Left ventricle myocardium inferior (tissue), 1 donor: ENCODE measurements at regions of chr11 and their contacts with region 1.

Region 1: DNA sequence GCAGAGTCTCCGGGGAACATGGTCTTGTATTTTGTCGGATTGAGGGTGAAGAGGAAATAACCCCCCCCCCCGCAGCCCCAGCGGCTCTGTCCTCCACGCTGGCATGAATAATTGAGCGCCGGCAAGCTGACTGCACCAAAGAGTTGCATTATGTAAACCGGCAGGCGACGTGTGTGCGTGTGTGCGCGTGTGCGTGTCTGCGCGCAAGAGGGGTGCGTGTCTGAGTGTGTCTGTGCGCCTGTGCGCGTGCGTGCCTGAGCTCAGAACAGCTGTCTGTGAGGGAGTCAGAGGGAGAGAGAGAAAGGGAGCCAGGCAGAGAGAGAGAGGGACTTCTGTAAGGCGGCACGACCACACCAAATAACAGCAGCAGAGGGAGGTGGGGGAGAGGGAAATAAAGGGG is 94.4 kb downstream of the SCN3B start:
- DNase-seq: peak; percentile 60
- H3K4me3 ChIP-seq: peak overlapping the region; percentile 55
- H3K27ac ChIP-seq: peak overlapping the region; percentile 75
- H3K4me1 ChIP-seq: peaks cover 39% of the 10 kb centered on the region
- H3K27me3 ChIP-seq: peaks cover 5% of the 10 kb centered on the region
- CTCF ChIP-seq: no peak

Region 2: DNA sequence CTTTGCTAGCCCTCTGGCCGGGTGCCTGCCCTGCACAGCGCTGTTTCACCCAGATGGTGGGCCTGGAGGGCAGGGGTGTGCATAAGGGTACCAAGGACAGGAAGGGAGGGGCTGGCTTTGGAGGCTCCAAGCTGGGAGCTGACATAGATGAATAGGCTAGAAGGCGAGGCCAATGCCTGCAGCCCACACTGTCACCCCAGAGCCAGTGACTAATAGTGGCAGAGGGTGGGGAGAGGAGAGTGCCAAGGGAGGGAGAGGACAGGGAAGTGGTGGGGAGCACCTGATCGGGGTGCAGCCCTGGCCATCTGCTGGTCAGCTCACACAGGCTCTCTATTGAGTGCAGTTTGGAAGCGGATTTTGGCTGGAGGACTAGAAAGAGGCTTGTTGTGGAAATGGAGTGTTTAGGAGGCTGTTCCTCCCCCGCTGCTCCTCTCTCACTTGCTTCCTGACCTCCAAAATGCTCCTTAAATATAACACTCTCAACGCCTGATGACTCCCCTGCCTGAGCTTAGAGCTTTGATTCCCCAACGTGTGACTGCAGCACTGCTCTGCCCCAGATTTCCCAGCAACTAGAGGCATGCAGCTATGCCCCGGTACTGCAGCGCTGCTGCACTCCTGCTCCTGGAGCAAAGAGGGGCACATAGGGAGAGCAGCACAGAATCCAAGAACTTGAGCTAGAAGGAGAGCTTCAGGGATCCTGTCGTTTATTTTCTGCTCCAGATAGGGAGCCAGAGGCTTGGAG is 40.8 kb before region 1 on chr11:
- intact Hi-C with region 1: loop called (anchors 5 kb)
- DNase-seq: no peak
- H3K4me3 ChIP-seq: no peak overlapping the region
- H3K27ac ChIP-seq: peak overlapping the region; percentile 86
- H3K4me1 ChIP-seq: peaks cover 36% of the 10 kb centered on the region
- H3K27me3 ChIP-seq: no peaks in the 10 kb centered on the region
- CTCF ChIP-seq: no peak